ENCODE measurements at regions of chr16 and their contacts with region 1.

Region 1: DNA sequence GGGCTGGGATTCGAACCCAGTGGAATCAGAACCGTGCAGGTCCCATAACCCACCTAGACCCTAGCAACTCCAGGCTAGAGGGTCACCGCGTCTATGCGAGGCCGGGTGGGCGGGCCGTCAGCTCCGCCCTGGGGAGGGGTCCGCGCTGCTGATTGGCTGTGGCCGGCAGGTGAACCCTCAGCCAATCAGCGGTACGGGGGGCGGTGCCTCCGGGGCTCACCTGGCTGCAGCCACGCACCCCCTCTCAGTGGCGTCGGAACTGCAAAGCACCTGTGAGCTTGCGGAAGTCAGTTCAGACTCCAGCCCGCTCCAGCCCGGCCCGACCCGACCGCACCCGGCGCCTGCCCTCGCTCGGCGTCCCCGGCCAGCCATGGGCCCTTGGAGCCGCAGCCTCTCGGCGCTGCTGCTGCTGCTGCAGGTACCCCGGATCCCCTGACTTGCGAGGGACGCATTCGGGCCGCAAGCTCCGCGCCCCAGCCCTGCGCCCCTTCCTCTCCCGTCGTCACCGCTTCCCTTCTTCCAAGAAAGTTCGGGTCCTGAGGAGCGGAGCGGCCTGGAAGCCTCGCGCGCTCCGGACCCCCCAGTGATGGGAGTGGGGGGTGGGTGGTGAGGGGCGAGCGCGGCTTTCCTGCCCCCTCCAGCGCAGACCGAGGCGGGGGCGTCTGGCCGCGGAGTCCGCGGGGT is at the start of gene CDH1:
- DNase-seq: peak; percentile 87 to 92 (median 88)
- ATAC-seq: peak; percentile 63 to 86 (median 68)
- H3K4me3 ChIP-seq: peak within 1 kb of the TSS; percentile 55 to 64 (median 64)
- H3K27ac ChIP-seq: peak within 1 kb of the TSS; percentile 81 to 98 (median 91)
- H3K4me1 ChIP-seq: peaks cover 0 to 34% (median 18%) of the 10 kb centered on the region in 4 donors
- H3K27me3 ChIP-seq: no peaks in the 10 kb centered on the region
- CTCF ChIP-seq: no peak
- POLR2A ChIP-seq: peak; percentile 86
- total RNA-seq, gene CDH1: 54.3 to 130 (median 76.5) TPM

Region 2: DNA sequence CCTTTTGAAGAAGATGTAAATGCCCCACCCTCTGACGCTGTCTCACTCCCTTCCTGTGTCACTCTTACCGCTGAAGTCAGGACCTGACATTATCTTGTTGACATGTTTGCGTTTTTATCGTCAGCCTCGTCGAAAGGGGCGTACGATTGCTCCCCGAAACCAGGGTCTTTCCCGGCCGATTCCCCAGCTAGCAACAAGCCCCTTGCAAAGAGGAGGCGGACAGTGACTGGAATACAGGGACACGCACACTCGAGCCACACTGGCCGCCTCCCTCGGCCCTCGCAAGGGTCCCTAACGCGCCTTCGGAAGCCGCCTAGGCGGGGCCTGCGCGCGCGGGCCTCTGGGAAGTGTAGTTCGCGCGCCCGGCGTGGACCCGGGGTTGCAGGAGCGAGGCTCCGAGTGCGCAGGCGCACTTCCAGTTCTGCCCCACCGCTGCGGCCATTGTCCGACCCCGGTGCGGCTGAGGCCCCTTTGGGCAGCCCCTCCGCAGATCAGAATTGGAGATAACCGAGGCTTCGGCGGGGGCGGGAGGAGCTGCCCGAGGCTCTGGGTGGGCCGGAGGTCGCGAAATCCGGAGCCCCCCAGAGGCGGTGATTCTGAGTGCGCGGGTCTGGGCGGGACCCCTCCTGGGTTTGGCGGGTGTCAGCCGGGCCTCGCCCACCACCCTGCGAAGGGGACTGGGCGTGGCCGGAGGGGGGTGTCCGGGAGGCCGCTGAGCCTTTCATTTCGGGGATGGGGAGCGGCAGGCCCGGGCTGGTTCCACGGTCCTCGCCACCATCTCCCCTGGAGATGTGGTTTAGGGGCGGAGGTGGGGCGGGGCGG is 198.1 kb before region 1 on chr16 and contains the start of gene ZFP90:
- intact Hi-C with region 1: no loop called
- DNase-seq: peak; percentile 88 to 90 (median 88)
- ATAC-seq: peak; percentile 98 to 100 (median 99)
- H3K4me3 ChIP-seq: peak within 1 kb of the TSS; percentile 95 to 98 (median 96)
- H3K27ac ChIP-seq: peak within 1 kb of the TSS; percentile 51 to 77 (median 73)
- H3K4me1 ChIP-seq: no peaks in the 10 kb centered on the region
- H3K27me3 ChIP-seq: no peaks in the 10 kb centered on the region
- CTCF ChIP-seq: no peak
- POLR2A ChIP-seq: peak; percentile 48
- total RNA-seq, gene ZFP90: 3.4 to 11.3 (median 6.2) TPM

Region 3: GRCh38 chr16:68786685-68787418 is 49.7 kb after region 1 on chr16:
- intact Hi-C with region 1: loop called (anchors 10 kb)
- DNase-seq: peak; percentile 42 to 71 (median 64)
- ATAC-seq: peak; percentile 71 to 79 (median 77)
- H3K4me3 ChIP-seq: no peak overlapping the region
- H3K27ac ChIP-seq: peak overlapping the region; percentile 18 to 72 (median 35)
- H3K4me1 ChIP-seq: peaks cover 0 to 59% (median 21%) of the 10 kb centered on the region in 4 donors
- H3K27me3 ChIP-seq: no peaks in the 10 kb centered on the region
- CTCF ChIP-seq: no peak
- POLR2A ChIP-seq: no peak

Measured in right lobe of liver (tissue), 6 donors.